ENCODE measurements at regions of chr1 and their contacts with region 1.

Region 1: DNA sequence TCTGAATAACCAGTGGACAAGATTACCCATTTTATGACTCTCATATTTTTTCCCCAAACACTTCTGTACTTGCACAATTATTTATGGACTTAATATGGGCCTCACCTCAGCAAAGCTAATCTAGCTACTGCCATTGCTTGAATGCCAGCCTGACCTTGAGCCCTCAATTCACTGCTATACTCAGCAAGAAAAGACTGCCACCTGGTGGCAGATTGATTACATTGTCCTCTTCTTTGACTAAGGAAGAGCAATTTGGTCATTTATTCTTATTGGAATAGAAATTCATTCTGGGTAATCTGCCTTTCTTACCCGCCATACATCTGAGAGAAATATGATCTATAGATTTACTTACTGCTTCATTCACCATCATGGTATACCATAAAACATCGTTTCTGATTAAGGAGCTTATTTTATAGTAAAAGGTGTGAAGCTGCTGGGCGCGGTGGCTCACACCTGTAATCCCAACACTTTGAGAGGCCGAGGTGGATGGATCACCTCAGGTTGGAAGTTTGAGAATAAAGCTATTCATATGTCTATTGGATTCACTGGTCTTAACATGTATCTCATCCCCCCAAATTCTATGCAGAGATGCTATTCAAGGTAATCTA is 32.9 kb upstream of the DIPK1A start:
- DNase-seq: peak; percentile 89
- H3K4me3 ChIP-seq: no peak overlapping the region
- H3K27ac ChIP-seq: peak overlapping the region in 2 of 4 donors; percentile 17 to 19
- H3K4me1 ChIP-seq: peaks cover 0 to 5% (median 0%) of the 10 kb centered on the region in 4 donors
- H3K27me3 ChIP-seq: no peaks in the 10 kb centered on the region
- CTCF ChIP-seq: peak; percentile 80 to 92 (median 86)
- EP300 ChIP-seq: no peak
- POLR2A ChIP-seq: no peak

Region 2: GRCh38 chr1:92259350-92259749 is 734.9 kb before region 1 on chr1:
- intact Hi-C with region 1: no loop called
- DNase-seq: no peak
- H3K4me3 ChIP-seq: no peak overlapping the region
- H3K27ac ChIP-seq: no peak overlapping the region
- H3K4me1 ChIP-seq: no peaks in the 10 kb centered on the region
- H3K27me3 ChIP-seq: no peaks in the 10 kb centered on the region
- CTCF ChIP-seq: no peak
- EP300 ChIP-seq: no peak
- POLR2A ChIP-seq: no peak

Region 3: GRCh38 chr1:92858564-92859399 is 135.4 kb before region 1 on chr1:
- intact Hi-C with region 1: loop called (anchors 1 kb)
- DNase-seq: peak; percentile 68
- H3K4me3 ChIP-seq: peak overlapping the region; percentile 1 to 38 (median 18)
- H3K27ac ChIP-seq: peak overlapping the region in 3 of 4 donors; percentile 30 to 52 (median 41)
- H3K4me1 ChIP-seq: peaks cover 0 to 11% (median 4%) of the 10 kb centered on the region in 4 donors
- H3K27me3 ChIP-seq: no peaks in the 10 kb centered on the region
- CTCF ChIP-seq: peak; percentile 94 to 99 (median 96)
- EP300 ChIP-seq: no peak
- POLR2A ChIP-seq: no peak

Region 4: DNA sequence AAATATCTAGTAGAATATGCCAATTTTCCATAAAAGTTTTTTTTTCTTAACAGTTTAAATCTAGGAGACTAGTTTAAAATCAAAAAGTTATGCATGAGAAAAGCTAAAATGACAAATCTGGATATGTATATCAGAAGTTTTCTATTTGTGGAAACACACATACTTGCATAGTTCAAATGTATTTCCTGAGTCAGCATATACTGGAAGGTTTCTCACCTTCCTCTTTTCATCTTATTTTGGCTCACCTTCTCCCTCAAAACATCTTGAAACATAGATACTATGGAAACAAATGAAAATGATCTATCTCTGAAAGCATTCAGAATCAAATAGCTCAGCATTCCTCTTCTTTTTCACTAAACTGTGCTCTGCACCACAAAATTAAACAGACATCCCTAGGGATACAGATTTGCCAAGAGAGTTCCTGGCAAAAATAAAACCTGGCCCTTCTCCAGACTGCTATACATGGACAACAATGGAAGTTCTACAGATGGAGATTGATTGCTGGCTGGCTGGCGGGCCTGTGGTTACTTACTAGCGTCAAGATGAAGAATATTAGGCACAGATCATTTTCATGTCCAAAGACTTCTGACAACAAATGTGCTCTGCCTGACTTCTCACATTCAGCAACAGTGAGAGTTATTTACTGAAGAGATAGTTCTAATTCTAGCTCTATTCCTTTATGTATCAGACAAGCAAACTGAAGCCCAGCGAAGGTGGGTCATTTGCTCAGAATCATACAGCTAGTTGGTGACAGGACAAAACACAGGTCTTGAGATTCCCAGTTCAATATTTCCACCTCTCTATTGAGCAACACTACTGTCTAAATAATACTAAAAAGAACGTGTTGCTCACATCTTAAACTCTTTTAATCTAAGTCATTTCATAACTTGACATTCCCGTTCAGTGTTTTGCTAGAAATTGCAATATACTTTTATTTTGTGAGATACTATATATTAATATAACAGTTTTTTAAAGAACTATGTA is 59.5 kb before region 1 on chr1:
- intact Hi-C with region 1: no loop called
- DNase-seq: no peak
- H3K4me3 ChIP-seq: peak overlapping the region in 1 of 4 donors; percentile 17
- H3K27ac ChIP-seq: peak overlapping the region; percentile 66 to 80 (median 70)
- H3K4me1 ChIP-seq: peaks cover 0 to 59% (median 45%) of the 10 kb centered on the region in 4 donors
- H3K27me3 ChIP-seq: no peaks in the 10 kb centered on the region
- CTCF ChIP-seq: no peak
- EP300 ChIP-seq: no peak
- POLR2A ChIP-seq: no peak

Region 5: GRCh38 chr1:93123201-93123783 is 129.1 kb after region 1 on chr1:
- intact Hi-C with region 1: no loop called
- DNase-seq: no peak
- H3K4me3 ChIP-seq: no peak overlapping the region
- H3K27ac ChIP-seq: no peak overlapping the region
- H3K4me1 ChIP-seq: no peaks in the 10 kb centered on the region
- H3K27me3 ChIP-seq: no peaks in the 10 kb centered on the region
- CTCF ChIP-seq: no peak
- EP300 ChIP-seq: no peak
- POLR2A ChIP-seq: no peak